Mammary epithelial cell (primary cell): ENCODE measurements at regions of chr5 and their contacts with region 1.

Region 1: GRCh38 chr5:138641547-138642298 is 66.5 kb upstream of the HSPA9 start:
- DNase-seq: peak; percentile 51
- H3K4me3 ChIP-seq: no peak overlapping the region
- H3K27ac ChIP-seq: no peak overlapping the region
- H3K4me1 ChIP-seq: peaks cover 5% of the 10 kb centered on the region
- H3K27me3 ChIP-seq: no peaks in the 10 kb centered on the region
- CTCF ChIP-seq: peak; percentile 77 to 79

Region 2: DNA sequence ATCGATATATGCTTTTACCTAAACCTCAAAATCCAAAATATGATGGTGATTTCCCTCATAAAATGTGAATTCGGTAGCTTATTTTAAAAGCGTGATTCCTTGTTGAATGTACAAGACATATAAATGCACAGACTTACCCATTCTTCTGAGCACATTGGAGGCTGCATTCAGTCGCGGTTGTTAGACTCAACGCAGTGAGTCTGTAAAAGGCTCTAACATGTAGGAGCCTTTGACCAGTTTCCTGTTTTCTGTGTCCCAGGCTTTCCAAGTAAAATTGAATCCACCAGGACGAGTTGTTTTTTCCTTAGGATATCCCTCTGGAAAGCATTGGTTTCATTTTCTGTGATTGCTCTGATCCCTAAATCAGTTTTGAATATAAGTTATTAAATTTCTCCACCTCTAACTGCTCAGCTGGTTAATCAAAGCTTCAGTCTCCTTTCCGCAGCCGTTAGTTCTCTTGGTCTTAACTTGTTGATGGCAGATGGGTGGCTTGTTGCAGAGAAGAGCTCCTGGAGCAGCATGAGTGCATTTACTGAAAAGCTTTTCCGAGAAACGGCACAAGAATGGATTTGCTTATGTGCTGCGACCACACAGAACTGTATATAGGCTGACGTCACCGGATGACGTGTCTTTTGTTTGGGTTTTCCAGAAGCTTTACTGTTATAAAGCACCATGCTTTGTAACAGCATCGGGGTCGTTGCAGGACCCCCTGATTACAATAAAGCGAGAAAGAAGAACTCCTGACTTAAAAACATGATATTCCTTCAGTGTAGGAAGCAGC is 233.2 kb after region 1 on chr5 and contains the start of gene LRRTM2:
- CTCF ChIA-PET with region 1: interaction called, 3 read pairs
- dilution Hi-C with region 1: no loop called
- in situ Hi-C with region 1: no loop called
- intact Hi-C with region 1: loop called (anchors 5 kb)
- DNase-seq: peak; percentile 82
- H3K4me3 ChIP-seq: peak within 1 kb of the TSS; percentile 30 to 44 (median 40)
- H3K27ac ChIP-seq: peak within 1 kb of the TSS; percentile 54
- H3K4me1 ChIP-seq: peaks cover 52% of the 10 kb centered on the region
- H3K27me3 ChIP-seq: no peaks in the 10 kb centered on the region
- CTCF ChIP-seq: no peak
- total RNA-seq, gene LRRTM2: 1.1 to 1.2 TPM

Region 3: GRCh38 chr5:138918686-138919085 is 277.0 kb after region 1 on chr5:
- CTCF ChIA-PET with region 1: no interaction called
- dilution Hi-C with region 1: no loop called
- in situ Hi-C with region 1: no loop called
- intact Hi-C with region 1: no loop called
- DNase-seq: no peak
- H3K4me3 ChIP-seq: no peak overlapping the region
- H3K27ac ChIP-seq: no peak overlapping the region
- H3K4me1 ChIP-seq: peaks cover 5% of the 10 kb centered on the region
- H3K27me3 ChIP-seq: no peaks in the 10 kb centered on the region
- CTCF ChIP-seq: no peak

Region 4: DNA sequence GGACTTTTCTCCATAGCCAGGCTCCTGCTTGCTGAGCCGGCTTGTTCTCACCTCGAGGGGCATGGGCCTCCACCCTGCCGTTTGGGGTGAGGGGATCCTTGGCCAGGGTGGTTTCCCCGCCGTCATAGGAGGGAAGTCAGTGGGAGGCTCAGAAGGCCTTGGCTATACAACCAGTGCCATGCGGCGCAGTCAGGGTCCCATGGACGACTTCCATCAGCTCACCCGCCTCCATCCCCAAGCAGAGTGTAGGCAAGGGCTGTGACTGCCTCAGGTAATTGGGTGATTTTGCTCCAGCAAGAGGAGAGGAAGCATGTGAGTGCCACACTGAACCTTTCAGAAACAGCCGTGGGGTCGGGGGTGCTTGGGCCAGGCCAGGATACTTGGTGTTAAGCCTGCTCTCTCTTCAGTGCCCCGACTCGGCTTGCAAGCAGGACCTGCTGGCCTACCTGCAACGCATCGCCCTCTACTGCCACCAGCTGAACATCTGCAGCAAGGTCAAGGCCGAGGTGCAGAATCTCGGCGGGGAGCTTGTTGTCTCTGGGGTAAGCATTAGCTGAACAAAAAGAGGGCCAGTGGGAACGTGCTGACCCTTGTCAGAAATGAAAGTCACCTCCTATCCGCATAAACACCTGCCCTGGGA is 290.6 kb after region 1 on chr5:
- CTCF ChIA-PET with region 1: no interaction called
- dilution Hi-C with region 1: no loop called
- in situ Hi-C with region 1: no loop called
- intact Hi-C with region 1: loop called (anchors 10 kb)
- DNase-seq: no peak
- H3K4me3 ChIP-seq: no peak overlapping the region
- H3K27ac ChIP-seq: no peak overlapping the region
- H3K4me1 ChIP-seq: no peaks in the 10 kb centered on the region
- H3K27me3 ChIP-seq: no peaks in the 10 kb centered on the region
- CTCF ChIP-seq: no peak

Region 5: DNA sequence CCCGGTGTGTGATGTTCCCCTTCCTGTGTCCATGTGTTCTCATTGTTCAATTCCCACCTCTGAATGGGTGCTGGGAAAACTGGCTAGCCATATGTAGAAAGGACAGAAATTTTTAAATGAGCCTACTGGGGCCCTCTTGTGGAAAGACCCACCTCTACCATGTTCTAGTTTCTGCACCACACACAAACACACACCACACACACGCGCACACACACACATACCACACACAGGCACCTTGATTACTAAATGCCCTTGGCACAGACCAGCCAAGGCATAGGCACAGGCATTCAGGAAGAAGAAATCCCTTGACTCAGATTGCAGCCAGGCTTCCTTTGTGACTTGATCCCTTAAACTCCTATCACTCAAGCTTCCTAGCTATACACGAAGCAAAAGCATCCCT is 496.0 kb after region 1 on chr5:
- CTCF ChIA-PET with region 1: no interaction called
- dilution Hi-C with region 1: no loop called
- in situ Hi-C with region 1: no loop called
- intact Hi-C with region 1: loop called (anchors 5 kb)
- DNase-seq: peak; percentile 52
- H3K4me3 ChIP-seq: no peak overlapping the region
- H3K27ac ChIP-seq: no peak overlapping the region
- H3K4me1 ChIP-seq: peaks cover 20% of the 10 kb centered on the region
- H3K27me3 ChIP-seq: no peaks in the 10 kb centered on the region
- CTCF ChIP-seq: peak in 1 of 2 donors; percentile 32